ENCODE measurements at regions of chr17 and their contacts with region 1.

Region 1: DNA sequence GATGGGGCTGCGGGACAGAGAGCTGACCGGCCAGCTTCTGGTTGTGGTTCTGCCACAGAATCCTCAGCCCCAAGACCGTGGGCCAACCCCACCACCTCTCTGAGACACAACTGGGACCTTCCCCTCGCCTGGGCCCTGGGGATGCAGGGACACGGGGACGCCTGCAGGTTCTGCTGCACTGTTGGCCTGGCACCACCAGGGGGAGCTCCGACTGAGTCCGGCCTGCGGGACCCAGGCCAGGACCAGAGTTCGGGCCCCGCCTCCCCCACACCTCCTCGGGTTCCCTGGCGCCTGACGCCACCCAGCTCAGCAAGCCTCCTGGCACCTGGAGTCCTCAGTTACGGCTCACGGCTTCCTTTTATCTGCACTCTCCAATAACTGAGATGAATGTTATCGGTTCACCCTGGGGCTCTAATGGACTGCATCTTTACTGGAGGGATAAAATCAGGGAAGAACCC is 27.3 kb downstream of the TBC1D16 start:
- DNase-seq: peak; percentile 90
- ATAC-seq: peak; percentile 72

Region 2: GRCh38 chr17:80035943-80036714 is 27.7 kb after region 1 on chr17 and contains the start of gene CCDC40:
- intact Hi-C with region 1: loop called (anchors 2 kb)
- DNase-seq: peak; percentile 94
- ATAC-seq: peak; percentile 98
- total RNA-seq, gene CCDC40: 5.4 TPM

Region 3: GRCh38 chr17:80082403-80083135 is 74.2 kb after region 1 on chr17:
- intact Hi-C with region 1: loop called (anchors 5 kb)
- DNase-seq: no peak
- ATAC-seq: peak; percentile 42

Region 4: GRCh38 chr17:80132906-80133625 is 124.7 kb after region 1 on chr17:
- intact Hi-C with region 1: no loop called
- DNase-seq: no peak
- ATAC-seq: no peak